CD4-positive, alpha-beta T cell (primary cell): ENCODE measurements at regions of chr15 and their contacts with region 1.

Region 1: GRCh38 chr15:44910981-44911625 is 45.4 kb upstream of the TERB2 start:
- DNase-seq: no peak
- ATAC-seq: no peak
- H3K4me3 ChIP-seq: no peak overlapping the region
- H3K4me3 Mint-ChIP-seq: no peak overlapping the region
- H3K27ac ChIP-seq: no peak overlapping the region
- H3K27ac Mint-ChIP-seq: no peak overlapping the region
- H3K4me1 ChIP-seq: no peaks in the 10 kb centered on the region
- H3K4me1 Mint-ChIP-seq: no peaks in the 10 kb centered on the region
- H3K27me3 ChIP-seq: no peaks in the 10 kb centered on the region
- H3K27me3 Mint-ChIP-seq: no peaks in the 10 kb centered on the region
- CTCF ChIP-seq: no peak

Region 2: GRCh38 chr15:44971036-44971435 is 59.9 kb after region 1 on chr15:
- CTCF ChIA-PET with region 1: no interaction called
- POLR2A ChIA-PET with region 1: no interaction called
- intact Hi-C with region 1: loop called in 1 of 2 experiments (anchors 2 kb)
- DNase-seq: no peak
- ATAC-seq: no peak
- H3K4me3 ChIP-seq: no peak overlapping the region
- H3K4me3 Mint-ChIP-seq: no peak overlapping the region
- H3K27ac ChIP-seq: no peak overlapping the region
- H3K27ac Mint-ChIP-seq: no peak overlapping the region
- H3K4me1 ChIP-seq: no peaks in the 10 kb centered on the region
- H3K4me1 Mint-ChIP-seq: no peaks in the 10 kb centered on the region
- H3K27me3 ChIP-seq: no peaks in the 10 kb centered on the region
- H3K27me3 Mint-ChIP-seq: peaks cover 6% of the 10 kb centered on the region
- CTCF ChIP-seq: no peak

Region 3: GRCh38 chr15:45225506-45226273 is 314.6 kb after region 1 on chr15:
- CTCF ChIA-PET with region 1: no interaction called
- POLR2A ChIA-PET with region 1: no interaction called
- intact Hi-C with region 1: no loop called
- DNase-seq: no peak
- ATAC-seq: no peak
- H3K4me3 ChIP-seq: no peak overlapping the region
- H3K4me3 Mint-ChIP-seq: no peak overlapping the region
- H3K27ac ChIP-seq: no peak overlapping the region
- H3K27ac Mint-ChIP-seq: no peak overlapping the region
- H3K4me1 ChIP-seq: no peaks in the 10 kb centered on the region
- H3K4me1 Mint-ChIP-seq: no peaks in the 10 kb centered on the region
- H3K27me3 ChIP-seq: peaks cover 6 to 8% of the 10 kb centered on the region in 2 experiments
- H3K27me3 Mint-ChIP-seq: peaks cover 32% of the 10 kb centered on the region
- CTCF ChIP-seq: no peak